BJ (cell line): ENCODE measurements at regions of chr1 and their contacts with region 1.

Region 1: GRCh38 chr1:198157241-198157846 is 546 bp downstream of the NEK7 start:
- DNase-seq: no peak
- H3K4me3 ChIP-seq: peak overlapping the region; percentile 56
- H3K27me3 ChIP-seq: no peaks in the 10 kb centered on the region
- CTCF ChIP-seq: no peak

Region 2: DNA sequence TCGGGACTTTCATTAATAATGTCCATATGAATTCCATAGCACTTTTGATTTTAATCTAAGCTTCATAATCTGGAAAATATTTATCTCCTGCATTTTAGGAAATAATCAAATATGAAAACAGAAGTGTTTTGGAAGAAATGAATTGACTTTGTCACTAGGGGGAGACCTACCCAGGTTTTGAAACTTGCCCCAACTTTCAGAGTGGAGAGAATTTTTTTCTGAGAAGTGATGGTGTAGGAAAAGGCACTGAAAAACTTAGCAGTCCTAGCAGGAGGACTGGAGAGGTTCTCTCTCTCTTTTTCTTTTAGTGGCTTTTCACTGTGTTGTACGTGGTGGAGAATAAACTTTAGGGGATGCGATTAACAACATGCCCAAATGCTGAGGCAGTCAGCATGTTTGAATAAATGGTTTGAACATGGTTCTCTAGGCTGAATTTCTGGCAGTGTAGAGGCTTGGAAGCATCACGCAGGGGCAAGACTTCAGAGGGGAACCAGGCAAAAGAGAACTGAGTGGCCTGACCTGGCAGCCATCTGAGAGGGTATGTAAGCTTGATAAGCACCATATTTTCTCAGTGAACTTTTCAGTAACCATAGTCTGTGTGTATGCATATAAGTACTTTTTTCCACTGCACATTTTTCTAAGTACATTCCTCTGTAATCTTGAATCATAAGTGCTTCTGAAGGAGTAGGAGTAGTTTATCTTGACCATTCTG is 68.8 kb before region 1 on chr1:
- CTCF ChIA-PET with region 1: interaction called, 25 read pairs
- POLR2A ChIA-PET with region 1: no interaction called
- DNase-seq: no peak
- H3K4me3 ChIP-seq: peak overlapping the region; percentile 18
- H3K27me3 ChIP-seq: no peaks in the 10 kb centered on the region
- CTCF ChIP-seq: peak; percentile 68

Region 3: GRCh38 chr1:198102454-198102827 is 54.9 kb before region 1 on chr1:
- CTCF ChIA-PET with region 1: interaction called, 11 read pairs
- POLR2A ChIA-PET with region 1: interaction called, 4 read pairs
- DNase-seq: no peak
- H3K4me3 ChIP-seq: no peak overlapping the region
- H3K27me3 ChIP-seq: no peaks in the 10 kb centered on the region
- CTCF ChIP-seq: no peak

Region 4: GRCh38 chr1:198118134-198118533 is 39.2 kb before region 1 on chr1:
- CTCF ChIA-PET with region 1: interaction called, 11 read pairs
- POLR2A ChIA-PET with region 1: no interaction called
- DNase-seq: peak; percentile 85
- H3K4me3 ChIP-seq: no peak overlapping the region
- H3K27me3 ChIP-seq: no peaks in the 10 kb centered on the region
- CTCF ChIP-seq: no peak

Region 5: DNA sequence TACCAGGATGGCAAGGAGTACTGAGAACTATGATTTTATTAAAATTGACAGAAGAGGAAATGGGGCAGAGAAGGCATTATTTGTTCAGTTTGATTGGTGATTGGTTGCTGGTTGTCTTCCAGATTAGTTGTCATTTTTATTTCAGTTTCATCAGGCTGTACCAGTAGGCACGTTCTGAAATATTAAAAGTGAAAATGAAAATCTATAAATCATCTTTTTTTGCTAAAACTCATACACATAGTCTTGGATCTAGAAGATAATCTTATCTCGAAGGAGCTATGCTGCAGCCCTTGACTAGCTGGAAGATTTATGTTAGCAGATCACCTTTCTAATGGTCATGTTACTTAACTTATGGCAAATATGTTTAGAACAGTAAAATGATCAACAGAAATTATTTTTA is 28.4 kb after region 1 on chr1:
- CTCF ChIA-PET with region 1: no interaction called
- POLR2A ChIA-PET with region 1: no interaction called
- DNase-seq: no peak
- H3K4me3 ChIP-seq: no peak overlapping the region
- H3K27me3 ChIP-seq: no peaks in the 10 kb centered on the region
- CTCF ChIP-seq: no peak